MCF 10A (cell line): ENCODE measurements at regions of chr3 and their contacts with region 1.

Region 1: DNA sequence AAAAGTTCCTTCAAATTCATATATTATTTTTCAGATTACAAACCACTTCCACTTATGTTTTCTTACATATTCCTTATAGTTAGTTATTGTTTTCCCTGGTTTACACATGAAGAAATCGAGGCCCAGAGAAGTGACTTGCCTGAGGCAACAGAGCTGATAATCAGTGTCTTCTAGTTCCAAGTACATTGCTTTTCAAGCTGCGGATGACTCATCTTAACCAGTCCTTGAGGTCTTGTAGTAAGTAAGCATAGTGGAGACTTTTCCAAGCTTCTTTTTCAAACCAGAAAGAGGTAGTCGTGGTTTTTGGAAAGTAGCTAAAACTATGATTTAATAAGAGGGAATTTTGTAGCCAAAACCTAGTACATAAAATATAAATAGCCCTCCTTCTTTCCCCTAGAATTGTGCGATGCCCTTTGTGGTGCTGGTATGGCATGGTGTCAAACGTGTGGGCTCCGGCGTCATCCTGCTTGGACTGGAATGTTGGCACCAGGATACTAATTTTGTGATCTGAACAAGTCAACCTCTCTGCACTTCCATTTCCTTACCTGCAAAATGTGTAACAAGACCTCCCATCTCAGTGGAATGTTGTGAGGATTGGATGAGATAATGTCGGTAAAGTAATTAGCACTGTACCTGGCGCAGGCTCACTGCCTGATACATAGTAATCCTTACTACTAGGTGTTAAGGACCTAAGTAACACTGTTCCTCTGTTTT is 19.0 kb upstream of the DLG1 start:
- DNase-seq: peak; percentile 95
- H3K4me3 Mint-ChIP-seq: peak overlapping the region; percentile 66
- H3K27ac Mint-ChIP-seq: peak overlapping the region; percentile 73
- H3K4me1 Mint-ChIP-seq: peaks cover 25% of the 10 kb centered on the region
- H3K27me3 Mint-ChIP-seq: no peaks in the 10 kb centered on the region
- CTCF ChIP-seq: no peak

Region 2: DNA sequence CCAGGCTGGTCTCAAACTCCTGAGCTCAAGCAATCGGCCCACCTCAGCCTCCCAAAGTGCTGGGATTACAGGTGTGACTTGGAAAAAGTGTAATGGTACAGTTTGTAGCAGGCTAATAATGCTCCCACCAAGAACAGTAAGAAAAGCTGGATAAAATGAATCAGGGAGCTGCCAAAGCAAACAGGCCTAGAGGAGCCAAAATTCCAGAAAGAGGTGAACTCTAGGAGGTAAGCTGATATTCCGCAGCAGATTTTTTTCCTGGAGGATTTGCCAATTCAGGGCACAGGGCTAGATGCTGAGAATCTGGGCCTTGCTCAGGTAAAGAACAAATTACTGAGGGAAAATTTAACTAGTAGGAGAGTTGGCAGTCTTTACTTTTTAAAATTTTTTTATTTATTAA is 1018.9 kb before region 1 on chr3:
- CTCF ChIA-PET with region 1: no interaction called
- POLR2A ChIA-PET with region 1: no interaction called
- intact Hi-C with region 1: no loop called
- DNase-seq: no peak
- H3K4me3 Mint-ChIP-seq: no peak overlapping the region
- H3K27ac Mint-ChIP-seq: no peak overlapping the region
- H3K4me1 Mint-ChIP-seq: no peaks in the 10 kb centered on the region
- H3K27me3 Mint-ChIP-seq: no peaks in the 10 kb centered on the region
- CTCF ChIP-seq: no peak

Region 3: GRCh38 chr3:196757876-196758739 is 559.3 kb before region 1 on chr3:
- CTCF ChIA-PET with region 1: no interaction called
- POLR2A ChIA-PET with region 1: no interaction called
- intact Hi-C with region 1: no loop called
- DNase-seq: peak; percentile 52
- H3K4me3 Mint-ChIP-seq: no peak overlapping the region
- H3K27ac Mint-ChIP-seq: peak overlapping the region; percentile 47
- H3K4me1 Mint-ChIP-seq: peaks cover 28% of the 10 kb centered on the region
- H3K27me3 Mint-ChIP-seq: no peaks in the 10 kb centered on the region
- CTCF ChIP-seq: no peak

Region 4: DNA sequence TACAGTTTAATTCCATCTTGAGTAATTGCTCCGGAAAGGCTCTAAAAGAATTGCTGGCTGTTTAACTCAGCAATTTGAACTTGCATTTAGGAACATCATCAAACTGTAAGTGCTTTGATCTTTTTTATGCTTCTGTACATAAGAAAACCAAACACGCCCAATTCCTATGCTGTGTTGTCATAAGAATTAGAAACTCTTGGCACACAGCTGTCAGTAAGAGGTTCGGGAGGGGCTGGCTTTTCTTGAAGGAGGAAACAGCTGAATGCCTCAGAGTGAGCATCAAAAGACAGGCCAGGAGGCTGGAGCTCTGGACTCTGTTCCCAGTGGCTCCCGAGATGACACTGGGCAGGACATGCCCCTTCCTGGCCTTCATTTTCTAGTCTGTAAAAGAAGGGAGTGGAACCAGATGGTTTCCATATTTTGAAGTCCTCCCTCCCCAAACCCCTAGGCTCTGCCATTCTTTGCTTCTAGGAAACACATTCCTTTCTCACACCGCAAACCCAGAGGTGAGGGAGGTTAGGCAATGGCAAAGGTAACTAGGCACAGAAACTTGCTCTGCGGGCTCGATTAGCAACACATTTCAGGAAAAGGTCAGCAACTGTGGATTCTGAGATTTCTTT is 54.8 kb after region 1 on chr3:
- CTCF ChIA-PET with region 1: interaction called, 3 read pairs
- POLR2A ChIA-PET with region 1: interaction called, 21 read pairs
- intact Hi-C with region 1: no loop called
- DNase-seq: peak; percentile 89
- H3K4me3 Mint-ChIP-seq: peak overlapping the region; percentile 19
- H3K27ac Mint-ChIP-seq: peak overlapping the region; percentile 75
- H3K4me1 Mint-ChIP-seq: peaks cover 44% of the 10 kb centered on the region
- H3K27me3 Mint-ChIP-seq: no peaks in the 10 kb centered on the region
- CTCF ChIP-seq: no peak

Region 5: DNA sequence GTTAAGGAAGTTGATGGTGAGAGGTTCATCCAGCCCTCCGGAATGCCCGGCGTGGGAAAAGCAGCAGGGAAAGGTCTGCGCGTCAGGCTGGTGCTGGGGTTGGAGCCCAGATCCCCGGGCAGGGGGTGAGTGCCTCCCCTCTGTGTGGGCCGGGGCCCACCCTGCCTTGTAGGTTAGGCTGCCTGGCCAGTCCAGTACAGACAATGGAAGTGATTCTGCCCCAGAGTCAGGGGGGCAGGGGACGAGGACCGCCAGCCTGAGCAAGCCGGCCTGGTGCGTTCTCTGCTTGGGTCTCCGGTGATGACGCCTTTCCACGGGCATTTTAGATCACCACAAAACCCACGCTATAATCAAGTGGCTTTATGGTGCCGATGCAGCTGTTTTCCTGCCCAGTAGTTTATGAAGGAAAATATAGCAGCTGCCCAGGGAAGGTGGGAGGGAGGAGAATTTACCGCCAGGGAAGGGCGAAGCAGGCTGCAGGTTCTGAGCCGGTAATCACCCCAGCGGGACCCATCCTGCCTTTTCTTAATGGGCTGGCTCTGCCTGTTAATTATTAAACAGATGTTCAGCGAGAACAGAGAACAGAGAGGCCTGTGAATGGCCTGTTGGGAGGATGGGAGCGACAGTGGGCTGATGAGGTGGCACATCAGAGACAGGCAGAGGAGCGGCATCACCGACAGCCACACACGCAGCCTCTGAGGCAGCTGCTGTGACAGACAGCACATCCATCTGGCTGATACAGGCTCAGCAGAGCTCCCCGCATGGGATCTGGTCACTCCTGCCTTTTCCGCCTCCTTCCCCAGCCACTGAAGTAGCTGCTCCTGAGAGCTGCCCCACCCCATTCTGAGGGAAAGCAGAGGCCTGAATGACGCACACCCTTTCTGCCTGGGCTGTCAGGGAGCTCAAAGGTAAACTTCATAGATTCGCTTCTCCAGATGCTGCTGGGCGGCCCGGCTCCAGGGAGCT is 203.2 kb after region 1 on chr3:
- CTCF ChIA-PET with region 1: no interaction called
- POLR2A ChIA-PET with region 1: no interaction called
- intact Hi-C with region 1: no loop called
- DNase-seq: no peak
- H3K4me3 Mint-ChIP-seq: no peak overlapping the region
- H3K27ac Mint-ChIP-seq: no peak overlapping the region
- H3K4me1 Mint-ChIP-seq: peaks cover 31% of the 10 kb centered on the region
- H3K27me3 Mint-ChIP-seq: no peaks in the 10 kb centered on the region
- CTCF ChIP-seq: no peak